ENCODE measurements at regions of chr5 and their contacts with region 1.

Region 1: DNA sequence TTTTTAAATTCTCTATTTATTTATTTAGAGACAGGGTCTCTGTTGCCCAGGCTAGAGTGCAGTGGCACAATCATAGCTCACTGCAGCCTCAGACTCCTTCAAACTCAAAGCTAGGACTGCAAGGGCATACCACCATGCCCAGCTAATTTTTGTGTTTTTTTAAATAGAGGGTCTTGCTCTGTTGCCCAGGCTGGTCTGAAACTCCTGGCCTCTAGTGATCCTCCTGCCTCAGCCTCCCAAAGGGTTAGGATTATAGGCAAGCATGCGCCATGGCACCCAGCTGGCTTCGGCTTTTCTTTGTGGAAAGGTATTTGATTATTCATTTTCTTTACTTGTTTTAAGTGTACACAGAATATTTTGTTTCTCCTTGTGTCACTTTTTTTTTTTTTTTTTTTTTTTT is 5.2 kb downstream of the ZNF346 start:
- H3K4me3 ChIP-seq: no peak overlapping the region
- H3K27ac ChIP-seq: no peak overlapping the region
- H3K4me1 ChIP-seq: no peaks in the 10 kb centered on the region
- CTCF ChIP-seq: no peak

Region 2: DNA sequence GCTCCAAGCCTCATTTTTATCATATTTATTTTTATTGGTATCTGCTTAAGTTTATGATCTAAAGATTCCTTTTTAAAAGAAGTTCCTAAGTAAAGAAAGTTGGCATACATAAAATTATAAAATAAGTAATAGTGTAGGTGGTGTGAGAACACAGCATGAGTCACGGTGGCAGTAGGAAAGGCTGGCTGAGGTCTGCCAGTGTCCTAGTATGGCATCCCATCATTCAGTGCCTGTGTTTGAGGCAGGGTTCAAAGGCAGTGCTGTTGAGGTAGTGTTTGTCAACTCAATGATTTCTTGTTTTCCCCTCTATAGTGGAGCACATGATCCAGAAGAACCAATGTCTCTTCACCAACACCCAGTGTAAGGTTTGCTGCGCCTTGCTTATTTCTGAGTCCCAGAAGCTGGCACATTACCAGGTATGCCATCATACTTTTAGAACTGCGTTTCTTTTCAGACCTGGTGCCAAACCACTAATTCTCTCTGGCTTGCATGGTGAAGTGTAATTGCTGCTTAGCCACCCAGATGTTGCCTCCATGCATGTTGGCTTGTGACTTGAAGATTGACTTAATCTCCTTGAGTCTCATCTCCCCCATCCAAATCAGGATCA is 13.3 kb after region 1 on chr5:
- CTCF ChIA-PET with region 1: interaction called, 4 read pairs
- POLR2A ChIA-PET with region 1: interaction called, 10 read pairs
- H3K4me3 ChIP-seq: no peak overlapping the region
- H3K27ac ChIP-seq: no peak overlapping the region
- H3K4me1 ChIP-seq: no peaks in the 10 kb centered on the region
- CTCF ChIP-seq: no peak

Region 3: GRCh38 chr5:177094224-177095087 is 66.8 kb after region 1 on chr5:
- CTCF ChIA-PET with region 1: no interaction called
- POLR2A ChIA-PET with region 1: no interaction called
- H3K4me3 ChIP-seq: no peak overlapping the region
- H3K27ac ChIP-seq: no peak overlapping the region
- H3K4me1 ChIP-seq: no peaks in the 10 kb centered on the region
- CTCF ChIP-seq: no peak

Region 4: DNA sequence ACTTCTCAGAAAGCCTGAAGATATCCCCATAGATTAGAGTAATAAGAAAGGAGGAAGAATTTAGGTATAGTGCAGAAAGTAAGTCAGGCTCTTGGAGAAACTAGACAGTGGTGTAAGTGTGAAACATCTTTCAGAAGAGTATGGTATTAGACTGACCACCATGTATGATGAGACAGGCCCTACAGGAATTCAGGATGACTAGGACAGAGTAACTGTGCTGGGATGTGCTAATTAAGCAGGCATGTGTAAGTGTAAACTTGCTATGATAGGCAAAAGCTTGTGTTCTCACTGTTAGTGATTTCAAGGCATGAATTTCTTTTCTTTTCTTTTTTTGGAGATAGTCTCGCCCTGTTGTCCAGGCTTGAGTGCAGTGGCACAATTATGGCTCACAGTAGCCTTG is 205.1 kb after region 1 on chr5:
- CTCF ChIA-PET with region 1: no interaction called
- POLR2A ChIA-PET with region 1: no interaction called
- H3K4me3 ChIP-seq: no peak overlapping the region
- H3K27ac ChIP-seq: no peak overlapping the region
- H3K4me1 ChIP-seq: peaks cover 20% of the 10 kb centered on the region
- CTCF ChIP-seq: no peak